ENCODE measurements at regions of chr3 and their contacts with region 1.

Region 1: DNA sequence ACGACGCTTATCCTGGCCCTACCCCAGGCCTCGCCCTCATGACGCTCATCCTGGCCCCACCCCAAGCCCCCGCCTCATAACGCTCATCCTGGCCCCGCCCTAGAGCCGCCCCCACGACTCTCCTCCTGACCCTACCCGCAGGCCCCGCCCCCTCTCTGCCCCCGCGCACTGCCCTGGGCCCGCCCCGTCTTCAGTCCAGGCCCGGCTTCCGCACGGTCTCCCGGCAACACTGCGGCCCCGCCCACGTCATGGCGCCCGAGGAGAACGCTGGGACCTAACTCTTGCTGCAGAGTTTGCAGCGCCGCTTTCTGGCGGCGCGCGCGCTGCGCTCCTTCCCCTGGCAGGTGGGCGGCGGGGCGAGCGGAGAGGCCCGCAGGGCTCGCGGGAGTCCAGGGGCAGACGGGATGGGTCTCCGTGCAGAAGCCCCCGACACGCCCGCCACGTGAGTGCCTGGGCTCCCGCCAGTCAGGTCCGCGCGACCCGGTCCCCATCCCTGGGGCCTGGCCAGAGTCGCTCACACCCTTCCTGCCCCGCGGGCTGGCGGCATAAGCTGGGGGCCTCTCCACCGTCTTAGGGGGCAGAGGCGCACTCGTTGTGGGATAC is 52.5 kb upstream of the ROPN1B start:
- DNase-seq: peak in 1 of 7 donors; percentile 99
- H3K4me3 ChIP-seq: peak overlapping the region; percentile 18 to 81 (median 68)
- H3K27ac ChIP-seq: peak overlapping the region in 3 of 5 donors; percentile 26 to 97 (median 86)
- H3K4me1 ChIP-seq: peaks cover 4 to 10% of the 10 kb centered on the region in 2 donors
- H3K27me3 ChIP-seq: no peaks in the 10 kb centered on the region
- CTCF ChIP-seq: peak in 3 of 6 experiments; percentile 18 to 36 (median 19)
- POLR2A ChIP-seq: no peak

Region 2: GRCh38 chr3:125767641-125768040 is 148.8 kb before region 1 on chr3:
- intact Hi-C with region 1: loop called in 1 of 2 experiments (anchors 10 kb)
- DNase-seq: no peak
- H3K4me3 ChIP-seq: no peak overlapping the region
- H3K27ac ChIP-seq: no peak overlapping the region
- H3K4me1 ChIP-seq: no peaks in the 10 kb centered on the region
- H3K27me3 ChIP-seq: no peaks in the 10 kb centered on the region
- CTCF ChIP-seq: no peak
- POLR2A ChIP-seq: no peak

Region 3: GRCh38 chr3:125967138-125967537 is 50.7 kb after region 1 on chr3:
- intact Hi-C with region 1: no loop called
- DNase-seq: no peak
- H3K4me3 ChIP-seq: no peak overlapping the region
- H3K27ac ChIP-seq: no peak overlapping the region
- H3K4me1 ChIP-seq: peaks cover 2% of the 10 kb centered on the region in 2 donors
- H3K27me3 ChIP-seq: no peaks in the 10 kb centered on the region
- CTCF ChIP-seq: no peak
- POLR2A ChIP-seq: no peak

Region 4: GRCh38 chr3:126087552-126088175 is 171.2 kb after region 1 on chr3:
- intact Hi-C with region 1: no loop called
- DNase-seq: no peak
- H3K4me3 ChIP-seq: no peak overlapping the region
- H3K27ac ChIP-seq: no peak overlapping the region
- H3K4me1 ChIP-seq: peaks cover 0 to 15% of the 10 kb centered on the region in 2 donors
- H3K27me3 ChIP-seq: no peaks in the 10 kb centered on the region
- CTCF ChIP-seq: no peak
- POLR2A ChIP-seq: no peak

Measured in adrenal gland (tissue), 19 donors.